G401 (cell line): ENCODE measurements at regions of chr2 and their contacts with region 1.

Region 1: DNA sequence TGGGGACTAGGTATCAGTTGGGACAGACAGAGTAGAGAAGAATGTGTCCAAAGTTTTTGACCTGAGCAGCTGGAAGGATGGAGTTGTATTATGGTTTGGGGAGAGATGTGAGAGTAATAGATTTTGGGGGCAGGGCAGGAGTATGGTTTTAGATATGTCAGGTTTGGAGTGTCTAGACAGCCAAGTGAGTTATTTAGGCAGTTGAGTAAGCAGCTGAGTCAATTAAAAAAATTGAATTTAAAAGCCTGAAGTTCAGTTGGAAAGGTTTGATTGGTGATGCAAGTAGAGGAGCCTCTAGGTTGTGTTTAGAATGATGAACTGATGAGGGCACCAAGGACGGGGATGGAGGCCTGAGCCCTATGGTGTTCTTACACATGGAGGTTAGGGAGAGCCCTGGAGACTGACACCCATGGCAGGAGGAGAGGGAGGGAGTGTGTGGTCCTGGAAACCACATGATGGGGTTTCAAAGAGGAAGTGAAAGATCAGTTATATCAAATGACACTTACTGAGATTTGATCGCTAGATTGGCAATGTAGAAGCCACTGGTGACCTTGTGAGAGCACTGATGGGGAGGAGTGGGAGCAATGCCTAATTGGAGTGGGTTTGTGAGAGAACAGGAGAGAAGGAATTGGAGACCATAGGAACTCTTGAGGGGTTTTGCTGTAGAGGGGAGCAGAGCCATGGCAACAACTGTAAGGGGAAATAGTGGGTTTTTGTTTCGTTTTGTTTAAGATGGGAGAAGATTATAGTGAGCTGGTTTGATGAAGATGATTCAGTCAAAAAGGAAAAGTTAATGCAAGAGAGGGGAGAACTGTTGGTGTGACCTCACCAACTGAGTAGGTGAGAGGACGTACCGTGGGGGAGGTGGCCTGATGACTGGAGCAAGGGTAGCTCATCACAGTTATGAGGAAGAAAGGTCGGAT is 10.3 kb downstream of the ITGA6 start:
- DNase-seq: no peak

Region 2: DNA sequence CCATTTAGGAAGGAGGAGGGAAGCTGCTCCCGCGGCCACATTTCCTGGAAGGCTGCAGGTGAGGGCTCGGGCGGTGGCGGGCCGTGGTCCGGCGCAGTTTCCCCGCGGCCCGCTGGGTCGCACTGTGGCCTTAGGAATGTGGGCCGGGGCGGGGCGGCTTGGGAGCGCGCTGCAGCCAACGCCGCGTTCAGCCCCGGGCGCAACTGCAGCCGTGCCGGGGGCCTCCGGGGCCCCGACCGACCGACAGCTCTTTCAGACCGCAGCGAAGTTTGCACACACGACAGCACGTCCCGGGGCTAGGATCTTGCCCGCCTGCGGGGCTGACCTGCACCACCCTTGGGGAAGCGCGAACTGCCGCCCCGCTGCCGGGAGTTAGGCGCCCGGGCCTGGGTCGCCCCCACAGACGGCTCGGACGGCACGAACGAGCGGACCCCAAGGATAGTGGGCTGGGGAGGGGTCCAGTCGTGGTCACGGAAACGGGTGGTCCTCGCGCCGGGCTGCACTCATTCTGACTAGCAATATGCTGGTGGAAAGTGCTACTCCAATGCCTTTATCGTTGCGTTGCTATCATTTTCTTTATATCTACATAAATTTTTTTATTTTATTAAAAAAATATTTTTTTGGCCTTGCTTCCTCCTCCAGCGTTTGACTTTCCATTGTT is 265.0 kb before region 1 on chr2:
- in situ Hi-C with region 1: loop called (anchors 10 kb)
- DNase-seq: peak; percentile 39

Region 3: DNA sequence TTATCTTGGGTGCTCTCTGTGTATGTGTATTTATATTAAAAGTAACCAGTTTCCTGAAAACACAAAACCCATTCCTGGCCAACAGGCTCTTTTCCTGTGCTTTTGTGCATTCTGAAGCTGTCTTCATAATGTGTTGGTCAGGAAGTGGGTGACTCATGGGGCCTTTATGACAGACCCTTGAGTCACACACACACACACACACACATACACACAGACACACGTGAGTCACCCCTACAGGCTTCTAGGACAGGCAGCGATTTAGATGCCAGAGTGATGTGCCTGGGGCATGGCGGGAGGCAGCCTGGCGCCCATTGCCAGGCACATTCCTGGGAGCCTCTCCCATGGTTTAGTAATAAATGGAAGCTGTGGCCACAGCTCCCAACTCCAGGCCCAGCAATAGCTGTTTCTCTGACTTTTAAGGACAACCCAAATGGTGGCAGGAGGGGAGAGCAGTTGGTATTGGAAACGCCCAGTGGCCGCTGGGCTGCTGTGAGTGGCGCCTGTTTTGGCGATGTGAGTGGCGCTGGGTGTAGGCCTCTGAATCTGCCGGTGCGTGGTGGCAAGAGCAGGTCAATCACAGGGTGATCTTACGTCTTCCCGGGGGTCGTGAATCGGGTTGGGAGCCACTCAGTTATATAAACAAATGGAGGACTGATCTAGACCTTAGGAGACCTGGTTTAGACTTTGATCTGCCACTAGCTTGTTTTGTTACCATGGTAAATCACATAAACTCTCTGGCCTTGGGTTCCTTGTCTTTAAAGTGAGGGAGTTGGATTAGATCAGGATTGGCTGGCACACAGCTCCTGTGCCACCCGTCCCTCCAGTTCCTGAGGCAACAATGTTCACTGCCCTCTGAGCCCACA is 184.3 kb before region 1 on chr2:
- in situ Hi-C with region 1: no loop called
- DNase-seq: no peak

Region 4: GRCh38 chr2:172329774-172330671 is 107.7 kb before region 1 on chr2:
- in situ Hi-C with region 1: no loop called
- DNase-seq: no peak